ENCODE measurements at regions of chr1 and their contacts with region 1.

Region 1: DNA sequence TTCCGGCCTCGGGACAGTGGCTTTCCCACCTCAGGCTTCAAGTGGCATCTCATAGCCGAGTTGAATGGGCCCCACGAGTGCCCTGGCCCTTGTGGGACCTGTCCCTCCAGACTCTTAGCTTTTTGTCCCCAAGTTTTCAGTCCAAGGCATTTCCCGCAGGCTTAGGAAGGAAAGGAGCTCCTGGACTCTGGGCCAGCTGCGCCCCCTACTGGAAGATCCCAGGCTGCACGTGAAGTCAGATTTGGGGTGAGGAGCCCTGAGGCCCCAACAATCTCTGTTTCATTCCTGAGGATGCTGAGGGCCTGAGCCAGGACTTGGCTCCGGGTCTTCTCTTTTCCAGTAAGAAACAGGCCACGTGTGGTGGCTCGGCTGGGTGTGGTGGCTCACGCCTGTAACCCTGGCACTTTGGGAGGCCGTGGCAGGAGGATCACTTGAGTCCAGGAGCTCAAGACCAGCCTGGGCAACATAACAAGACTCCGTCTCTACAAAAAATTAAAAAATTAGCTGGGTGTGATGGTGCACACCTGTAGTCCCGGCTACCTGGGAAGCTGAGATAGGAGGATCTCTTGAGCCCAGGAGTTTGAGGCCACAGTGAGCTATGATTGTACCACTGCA is 67.4 kb downstream of the ARHGEF10L start:
- DNase-seq: peak; percentile 77 to 91 (median 90)
- ATAC-seq: peak; percentile 43 to 51
- H3K4me3 ChIP-seq: no peak overlapping the region
- H3K27ac ChIP-seq: no peak overlapping the region
- H3K4me1 ChIP-seq: peaks cover 2% of the 10 kb centered on the region
- H3K27me3 ChIP-seq: no peaks in the 10 kb centered on the region

Region 2: DNA sequence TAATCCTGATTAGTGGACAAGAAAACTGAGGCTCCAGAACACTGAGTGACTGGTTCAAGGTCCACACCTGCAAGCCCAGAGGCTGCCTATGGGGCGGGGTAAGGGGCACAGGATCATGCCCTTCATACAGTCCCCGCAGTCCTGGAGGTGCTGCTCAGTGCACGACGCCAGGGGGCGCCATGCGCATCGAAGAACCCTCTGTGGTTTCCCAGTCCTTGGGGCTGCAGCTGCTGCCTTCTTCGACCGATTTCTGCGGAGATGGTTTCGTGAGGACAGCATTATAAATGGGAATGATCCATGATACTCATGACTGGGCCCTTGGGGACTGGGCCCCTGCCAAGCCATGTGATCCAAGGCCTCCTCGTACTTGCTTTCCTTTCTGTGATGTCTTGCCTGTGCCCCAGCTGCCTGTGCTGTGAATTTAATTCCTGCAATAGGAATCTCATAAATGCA is 104.6 kb before region 1 on chr1:
- intact Hi-C with region 1: loop called (anchors 2 to 5 kb)
- DNase-seq: peak; percentile 85 to 95 (median 94)
- ATAC-seq: peak; percentile 94 to 95
- H3K4me3 ChIP-seq: no peak overlapping the region
- H3K27ac ChIP-seq: no peak overlapping the region
- H3K4me1 ChIP-seq: peaks cover 3% of the 10 kb centered on the region
- H3K27me3 ChIP-seq: no peaks in the 10 kb centered on the region